ENCODE measurements at regions of chr2 and their contacts with region 1.

Region 1: DNA sequence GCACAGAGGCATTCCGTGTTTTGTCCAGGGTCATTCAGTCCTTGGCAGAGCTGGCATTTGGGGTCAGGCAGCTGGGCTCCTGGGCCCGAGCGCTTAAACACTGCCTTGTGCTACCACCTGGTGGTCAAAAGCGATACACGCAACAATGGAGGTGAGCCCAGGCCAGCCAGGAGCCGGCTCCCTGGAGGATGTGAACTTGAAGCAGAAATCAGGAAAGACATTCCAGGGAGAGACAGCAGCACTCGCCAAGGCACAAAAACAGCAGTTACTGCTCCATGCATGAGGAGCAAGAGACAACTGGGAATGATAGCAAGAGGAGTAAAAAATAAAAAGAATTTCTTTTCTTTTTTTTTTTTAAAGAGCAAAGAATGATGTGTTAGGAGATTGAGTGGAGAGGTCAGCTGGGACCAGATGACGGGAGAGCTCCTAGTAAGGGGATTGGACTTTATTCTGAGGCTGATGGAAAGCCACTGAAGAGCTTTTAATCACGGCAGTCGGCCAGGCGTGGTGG is 20.7 kb downstream of the SCYGR8 start:
- DNase-seq: peak; percentile 74 to 90 (median 84)
- ATAC-seq: peak; percentile 80
- H3K4me3 ChIP-seq: no peak overlapping the region
- H3K4me1 ChIP-seq: peaks cover 15% of the 10 kb centered on the region
- CTCF ChIP-seq: peak; percentile 63

Region 2: GRCh38 chr2:227655454-227655853 is 111.0 kb before region 1 on chr2:
- intact Hi-C with region 1: loop called (anchors 5 kb)
- DNase-seq: no peak
- ATAC-seq: peak; percentile 67
- H3K4me3 ChIP-seq: no peak overlapping the region
- H3K4me1 ChIP-seq: no peaks in the 10 kb centered on the region
- CTCF ChIP-seq: no peak

Measured in mucosa of descending colon (tissue), 3 donors.